CD14-positive monocyte (primary cell): ENCODE measurements at regions of chr19 and their contacts with region 1.

Region 1: DNA sequence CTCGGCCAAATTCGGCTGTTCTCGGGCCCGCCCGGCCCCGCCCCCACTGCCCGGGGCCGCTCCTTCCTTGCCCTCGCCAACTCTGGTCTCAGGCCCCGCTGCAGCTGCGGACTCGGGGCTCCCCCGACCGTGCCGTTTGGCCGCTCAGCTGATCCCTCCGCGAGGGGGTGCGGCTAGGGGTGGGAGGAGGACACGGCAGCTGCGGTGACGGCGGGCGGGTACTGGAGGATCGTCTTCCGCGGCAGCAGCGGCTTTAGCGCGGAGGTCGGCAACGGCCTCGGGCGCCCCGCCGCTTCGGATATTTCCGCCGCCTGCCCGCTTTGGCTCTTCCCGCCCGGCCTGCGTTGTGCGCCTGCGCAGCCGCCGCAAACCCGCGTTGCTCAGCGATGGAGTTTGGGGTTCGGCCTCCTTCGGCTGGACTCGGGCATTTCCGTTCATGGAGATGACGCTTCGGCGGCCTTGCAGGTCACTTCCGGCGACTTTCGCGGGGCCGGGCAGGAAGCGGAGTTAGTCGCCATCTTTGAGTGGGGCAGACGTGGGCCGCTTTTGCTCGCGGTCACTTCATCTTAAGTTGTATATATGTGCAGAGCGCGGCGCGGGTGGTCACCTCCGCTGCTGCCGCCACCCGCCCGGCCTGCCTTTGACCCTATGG is 338 bp upstream of the UBE2M start:
- DNase-seq: peak; percentile 97 to 99 (median 98)
- H3K4me3 ChIP-seq: peak overlapping the region; percentile 53 to 95 (median 71)
- H3K4me3 Mint-ChIP-seq: peak overlapping the region; percentile 94 to 96
- H3K27ac ChIP-seq: peak overlapping the region; percentile 97 to 98
- H3K27ac Mint-ChIP-seq: peak overlapping the region; percentile 98 to 100 (median 99)
- H3K4me1 ChIP-seq: peaks cover 68 to 79% of the 10 kb centered on the region in 2 donors
- H3K4me1 Mint-ChIP-seq: peaks cover 73% of the 10 kb centered on the region
- H3K27me3 ChIP-seq: peaks cover 17 to 31% of the 10 kb centered on the region in 2 donors
- H3K27me3 Mint-ChIP-seq: peaks cover 30 to 31% (median 31%) of the 10 kb centered on the region in 3 donors
- CTCF ChIP-seq: no peak

Region 2: DNA sequence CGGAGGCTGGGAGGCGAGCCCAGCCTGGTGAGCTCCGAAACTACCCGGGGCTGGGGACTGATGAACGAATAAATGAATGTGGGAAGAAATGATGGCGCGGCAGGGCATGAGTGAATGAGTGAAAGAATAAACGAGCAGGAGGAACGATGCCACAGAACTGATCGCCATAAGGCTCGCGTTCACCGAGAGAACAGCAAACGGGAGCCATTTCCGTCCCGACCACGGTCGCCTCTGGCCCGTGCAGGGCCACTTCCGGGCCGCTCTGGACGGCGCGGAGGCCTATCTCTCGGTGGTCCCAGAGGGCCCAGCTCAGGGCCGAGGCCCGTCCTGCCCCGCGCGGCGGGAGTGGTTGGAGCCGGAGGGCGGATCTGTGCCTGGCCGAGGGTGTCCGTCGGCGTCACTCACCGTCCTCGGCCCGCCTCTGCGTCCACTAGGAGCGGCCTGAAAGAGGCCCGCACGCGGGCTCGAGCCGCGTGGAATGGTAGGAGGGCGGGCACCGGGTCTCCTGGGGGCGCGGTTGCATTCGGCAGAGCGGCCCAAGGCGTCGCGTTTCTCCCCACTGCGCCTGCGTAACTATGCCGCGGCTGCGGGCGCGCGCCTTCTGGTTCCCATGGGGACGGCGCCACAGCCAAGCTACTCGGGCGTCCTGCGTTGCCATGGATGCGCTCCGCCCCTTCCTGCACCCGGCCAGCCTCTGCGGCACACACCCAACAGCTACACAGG is 196.3 kb before region 1 on chr19 and contains the start of gene ZNF497:
- intact Hi-C with region 1: no loop called
- DNase-seq: peak; percentile 93 to 96 (median 94)
- H3K4me3 ChIP-seq: peak within 1 kb of the TSS; percentile 46 to 82 (median 64)
- H3K4me3 Mint-ChIP-seq: peak within 1 kb of the TSS; percentile 95 to 100
- H3K27ac ChIP-seq: peak within 1 kb of the TSS; percentile 72 to 85
- H3K27ac Mint-ChIP-seq: peak within 1 kb of the TSS; percentile 88 to 95 (median 95)
- H3K4me1 ChIP-seq: peaks cover 26 to 36% of the 10 kb centered on the region in 2 donors
- H3K4me1 Mint-ChIP-seq: peaks cover 22% of the 10 kb centered on the region
- H3K27me3 ChIP-seq: peaks cover 0 to 5% of the 10 kb centered on the region in 2 donors
- H3K27me3 Mint-ChIP-seq: peaks cover 2 to 16% (median 7%) of the 10 kb centered on the region in 3 donors
- CTCF ChIP-seq: no peak
- polyA plus RNA-seq, gene ZNF497: 0.28 to 0.60 (median 0.41) TPM

Region 3: GRCh38 chr19:58543826-58544590 is 14.7 kb before region 1 on chr19 and contains the start of gene TRIM28:
- intact Hi-C with region 1: loop called in 1 of 2 experiments (anchors 2 kb)
- DNase-seq: peak; percentile 96 to 98 (median 97)
- H3K4me3 ChIP-seq: peak within 1 kb of the TSS; percentile 76 to 93 (median 84)
- H3K4me3 Mint-ChIP-seq: peak within 1 kb of the TSS; percentile 90 to 93
- H3K27ac ChIP-seq: peak within 1 kb of the TSS; percentile 98 to 100
- H3K27ac Mint-ChIP-seq: peak within 1 kb of the TSS; percentile 98 to 100 (median 99)
- H3K4me1 ChIP-seq: peaks cover 29 to 32% of the 10 kb centered on the region in 2 donors
- H3K4me1 Mint-ChIP-seq: peaks cover 38% of the 10 kb centered on the region
- H3K27me3 ChIP-seq: peaks cover 2 to 6% of the 10 kb centered on the region in 2 donors
- H3K27me3 Mint-ChIP-seq: peaks cover 5 to 17% (median 12%) of the 10 kb centered on the region in 3 donors
- CTCF ChIP-seq: no peak
- polyA plus RNA-seq, gene TRIM28: 16.2 to 234 (median 35.0) TPM

Region 4: GRCh38 chr19:58572818-58573657 is 14.3 kb after region 1 on chr19 and contains the start of gene MZF1:
- intact Hi-C with region 1: loop called (anchors 1 kb)
- DNase-seq: peak; percentile 100
- H3K4me3 ChIP-seq: peak within 1 kb of the TSS; percentile 58 to 82 (median 78)
- H3K4me3 Mint-ChIP-seq: peak within 1 kb of the TSS; percentile 99 to 100
- H3K27ac ChIP-seq: peak within 1 kb of the TSS; percentile 96 to 99
- H3K27ac Mint-ChIP-seq: peak within 1 kb of the TSS; percentile 100
- H3K4me1 ChIP-seq: peaks cover 32 to 37% of the 10 kb centered on the region in 2 donors
- H3K4me1 Mint-ChIP-seq: peaks cover 32% of the 10 kb centered on the region
- H3K27me3 ChIP-seq: no peaks in the 10 kb centered on the region
- H3K27me3 Mint-ChIP-seq: peaks cover 0 to 6% (median 0%) of the 10 kb centered on the region in 3 donors
- CTCF ChIP-seq: no peak
- polyA plus RNA-seq, gene MZF1: 1.6 to 55.6 (median 1.7) TPM